ENCODE measurements at regions of chr1 and their contacts with region 1.

Region 1: DNA sequence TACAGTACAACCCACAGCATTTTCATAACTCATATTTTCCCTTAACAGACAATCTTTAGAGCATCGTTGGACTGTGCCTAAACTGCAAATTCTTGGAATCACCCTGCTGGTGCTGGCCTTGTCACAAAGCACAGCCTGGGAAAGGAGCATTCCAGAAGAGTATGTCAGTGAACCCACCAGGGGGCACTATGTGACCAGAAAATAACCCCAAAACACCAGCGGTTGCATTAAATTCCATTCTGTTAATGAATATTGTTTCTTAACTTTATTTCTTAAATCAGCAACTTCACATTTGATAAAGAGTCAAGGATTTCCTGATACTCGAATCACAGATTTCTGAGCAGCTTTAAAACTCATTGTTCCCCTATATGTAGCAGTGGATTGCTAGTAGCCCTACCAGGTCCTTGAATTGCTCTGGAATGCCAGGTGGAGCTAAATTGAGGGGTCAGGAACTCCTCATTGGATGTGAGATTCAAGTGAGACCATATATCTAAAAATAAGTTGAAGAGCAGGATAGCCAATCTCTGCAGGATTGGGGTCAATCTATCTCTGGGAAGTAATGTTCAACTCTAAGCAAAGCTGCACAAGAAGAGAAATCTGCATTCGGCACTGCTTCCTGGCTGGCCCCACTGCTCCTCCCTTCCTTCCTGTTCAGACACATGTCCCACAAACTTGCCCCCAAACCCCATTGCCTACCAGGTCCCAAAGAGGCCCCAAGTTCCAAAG is 12.7 kb upstream of the RAB4A start:
- DNase-seq: peak; percentile 74
- ATAC-seq: peak; percentile 54
- H3K4me3 Mint-ChIP-seq: peak overlapping the region; percentile 56
- H3K27ac Mint-ChIP-seq: peak overlapping the region; percentile 73
- H3K4me1 Mint-ChIP-seq: peaks cover 35% of the 10 kb centered on the region
- H3K27me3 Mint-ChIP-seq: peaks cover 2% of the 10 kb centered on the region

Region 2: GRCh38 chr1:228664399-228664914 is 593.7 kb before region 1 on chr1:
- CTCF ChIA-PET with region 1: interaction called, 49 read pairs
- POLR2A ChIA-PET with region 1: no interaction called
- DNase-seq: peak; percentile 86
- ATAC-seq: no peak
- H3K4me3 Mint-ChIP-seq: no peak overlapping the region
- H3K27ac Mint-ChIP-seq: no peak overlapping the region
- H3K4me1 Mint-ChIP-seq: peaks cover 7% of the 10 kb centered on the region
- H3K27me3 Mint-ChIP-seq: peaks cover 23% of the 10 kb centered on the region

Region 3: GRCh38 chr1:228734881-228735801 is 523.1 kb before region 1 on chr1 and contains the start of gene RHOU:
- CTCF ChIA-PET with region 1: interaction called, 15 read pairs
- POLR2A ChIA-PET with region 1: no interaction called
- DNase-seq: peak; percentile 76
- ATAC-seq: peak; percentile 88
- H3K4me3 Mint-ChIP-seq: peak within 1 kb of the TSS; percentile 85
- H3K27ac Mint-ChIP-seq: peak within 1 kb of the TSS; percentile 75
- H3K4me1 Mint-ChIP-seq: peaks cover 31% of the 10 kb centered on the region
- H3K27me3 Mint-ChIP-seq: peaks cover 23% of the 10 kb centered on the region
- total RNA-seq, gene RHOU: 9.5 to 9.7 TPM

Region 4: DNA sequence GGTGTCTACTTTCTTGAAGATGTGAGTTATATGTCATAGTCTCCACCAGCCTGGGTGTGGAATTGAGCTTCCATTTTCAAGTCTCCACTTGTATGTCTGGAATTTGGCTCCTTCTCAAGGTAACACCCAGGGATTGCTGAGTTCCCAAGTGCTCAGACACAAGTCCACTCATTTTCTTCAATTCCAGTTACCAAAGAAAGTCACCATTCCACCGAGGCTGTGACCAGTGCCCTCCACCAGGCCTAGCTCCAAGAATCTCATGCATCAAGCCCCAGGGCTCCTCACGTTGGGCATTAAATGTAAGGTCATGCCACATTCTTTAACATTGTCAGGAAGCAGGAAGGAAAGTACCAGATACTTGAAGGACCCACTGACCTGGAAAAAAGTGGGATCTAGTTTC is 10.3 kb after region 1 on chr1:
- CTCF ChIA-PET with region 1: interaction called, 13 read pairs
- POLR2A ChIA-PET with region 1: interaction called, 4 read pairs
- DNase-seq: no peak
- ATAC-seq: no peak
- H3K4me3 Mint-ChIP-seq: no peak overlapping the region
- H3K27ac Mint-ChIP-seq: no peak overlapping the region
- H3K4me1 Mint-ChIP-seq: peaks cover 19% of the 10 kb centered on the region
- H3K27me3 Mint-ChIP-seq: no peaks in the 10 kb centered on the region

Region 5: DNA sequence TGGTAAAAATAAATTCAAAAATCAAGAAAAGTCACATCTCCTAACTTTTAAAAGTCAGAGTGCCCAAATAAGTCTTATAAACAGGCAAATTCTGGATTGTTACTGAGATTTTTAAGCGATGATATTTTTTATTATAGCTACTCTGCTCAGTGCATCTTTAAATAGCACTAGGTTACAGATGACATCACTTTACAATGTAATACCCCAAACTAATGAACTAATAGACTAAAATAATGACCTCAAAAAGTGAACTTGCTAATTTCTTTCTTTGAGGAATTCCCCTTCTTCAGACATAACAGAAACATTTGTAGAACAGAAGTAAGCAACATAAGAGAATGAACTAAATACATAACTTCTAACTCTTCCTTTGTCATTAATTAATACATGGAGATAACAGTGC is 208.7 kb after region 1 on chr1:
- CTCF ChIA-PET with region 1: interaction called, 13 read pairs
- POLR2A ChIA-PET with region 1: no interaction called
- DNase-seq: no peak
- ATAC-seq: no peak
- H3K4me3 Mint-ChIP-seq: no peak overlapping the region
- H3K27ac Mint-ChIP-seq: no peak overlapping the region
- H3K4me1 Mint-ChIP-seq: no peaks in the 10 kb centered on the region
- H3K27me3 Mint-ChIP-seq: no peaks in the 10 kb centered on the region

Region 6: GRCh38 chr1:229507951-229508822 is 250.0 kb after region 1 on chr1 and contains the start of gene NUP133:
- CTCF ChIA-PET with region 1: interaction called, 11 read pairs
- POLR2A ChIA-PET with region 1: interaction called, 3 read pairs
- DNase-seq: peak; percentile 99
- ATAC-seq: peak; percentile 95
- H3K4me3 Mint-ChIP-seq: peak within 1 kb of the TSS; percentile 87
- H3K27ac Mint-ChIP-seq: peak within 1 kb of the TSS; percentile 96
- H3K4me1 Mint-ChIP-seq: peaks cover 36% of the 10 kb centered on the region
- H3K27me3 Mint-ChIP-seq: peaks cover 2% of the 10 kb centered on the region
- total RNA-seq, gene NUP133: 46.8 to 49.7 TPM

Measured in activated CD8-positive, alpha-beta T cell treated with anti-CD3 and anti-CD28 coated beads, Interleukin-2, amount 10 ng/mL, durations not matched to agents 7 days and 5 days (primary cell).